Aorta (tissue), 5 donors: ENCODE measurements at regions of chr20 and their contacts with region 1.

Region 1: GRCh38 chr20:833450-834150 is at the start of gene FAM110A:
- DNase-seq: peak; percentile 98 to 99
- ATAC-seq: peak; percentile 98
- H3K4me3 ChIP-seq: peak within 1 kb of the TSS; percentile 35 to 54
- H3K27ac ChIP-seq: no peak within 1 kb of the TSS
- H3K4me1 ChIP-seq: no peaks in the 10 kb centered on the region
- H3K27me3 ChIP-seq: no peaks in the 10 kb centered on the region
- total RNA-seq, gene FAM110A: 3.6 to 7.0 TPM

Region 2: GRCh38 chr20:775679-776135 is 57.9 kb before region 1 on chr20:
- intact Hi-C with region 1: no loop called
- DNase-seq: no peak
- ATAC-seq: no peak
- H3K4me3 ChIP-seq: no peak overlapping the region
- H3K27ac ChIP-seq: no peak overlapping the region
- H3K4me1 ChIP-seq: no peaks in the 10 kb centered on the region
- H3K27me3 ChIP-seq: no peaks in the 10 kb centered on the region

Region 3: GRCh38 chr20:1118336-1119127 is 284.9 kb after region 1 on chr20 and contains the start of gene PSMF1:
- intact Hi-C with region 1: loop called in 1 of 2 experiments (anchors 10 kb)
- DNase-seq: peak; percentile 97 to 98
- ATAC-seq: peak; percentile 99
- H3K4me3 ChIP-seq: peak within 1 kb of the TSS; percentile 59 to 73
- H3K27ac ChIP-seq: no peak within 1 kb of the TSS
- H3K4me1 ChIP-seq: no peaks in the 10 kb centered on the region
- H3K27me3 ChIP-seq: no peaks in the 10 kb centered on the region
- total RNA-seq, gene PSMF1: 96.9 to 105 TPM

Region 4: DNA sequence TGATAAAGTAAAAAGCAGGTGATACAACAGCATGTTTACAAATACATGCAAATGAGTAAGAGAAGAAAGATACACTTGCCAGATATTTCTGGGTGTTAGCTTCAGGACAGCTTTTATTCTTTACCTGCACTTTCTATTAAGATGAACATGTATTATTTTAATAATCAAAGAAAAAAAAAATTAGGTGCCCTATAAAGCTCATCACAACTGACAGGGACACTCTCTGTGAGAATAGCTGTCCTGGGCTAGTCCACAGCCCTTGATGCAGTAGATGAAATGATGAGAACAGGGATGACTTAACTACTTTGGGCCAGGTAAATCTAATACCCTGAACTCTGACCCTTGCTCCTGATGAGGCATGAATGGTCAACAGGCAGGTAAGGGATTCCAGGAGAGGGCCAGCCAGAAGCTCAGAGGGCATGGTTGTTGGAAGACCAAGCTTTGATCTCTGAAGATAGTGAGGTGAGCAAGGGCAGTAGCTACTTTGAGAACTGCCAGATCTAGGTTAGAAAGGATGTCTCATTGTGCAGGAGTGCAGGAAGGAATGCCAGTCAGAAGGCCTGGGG is 617.4 kb after region 1 on chr20:
- intact Hi-C with region 1: no loop called
- DNase-seq: no peak
- ATAC-seq: no peak
- H3K4me3 ChIP-seq: no peak overlapping the region
- H3K27ac ChIP-seq: no peak overlapping the region
- H3K4me1 ChIP-seq: no peaks in the 10 kb centered on the region
- H3K27me3 ChIP-seq: no peaks in the 10 kb centered on the region